Activated CD4-positive, alpha-beta T cell treated with anti-CD3 and anti-CD28 coated beads for 36 hours (primary cell): ENCODE measurements at regions of chr9 and their contacts with region 1.

Region 1: DNA sequence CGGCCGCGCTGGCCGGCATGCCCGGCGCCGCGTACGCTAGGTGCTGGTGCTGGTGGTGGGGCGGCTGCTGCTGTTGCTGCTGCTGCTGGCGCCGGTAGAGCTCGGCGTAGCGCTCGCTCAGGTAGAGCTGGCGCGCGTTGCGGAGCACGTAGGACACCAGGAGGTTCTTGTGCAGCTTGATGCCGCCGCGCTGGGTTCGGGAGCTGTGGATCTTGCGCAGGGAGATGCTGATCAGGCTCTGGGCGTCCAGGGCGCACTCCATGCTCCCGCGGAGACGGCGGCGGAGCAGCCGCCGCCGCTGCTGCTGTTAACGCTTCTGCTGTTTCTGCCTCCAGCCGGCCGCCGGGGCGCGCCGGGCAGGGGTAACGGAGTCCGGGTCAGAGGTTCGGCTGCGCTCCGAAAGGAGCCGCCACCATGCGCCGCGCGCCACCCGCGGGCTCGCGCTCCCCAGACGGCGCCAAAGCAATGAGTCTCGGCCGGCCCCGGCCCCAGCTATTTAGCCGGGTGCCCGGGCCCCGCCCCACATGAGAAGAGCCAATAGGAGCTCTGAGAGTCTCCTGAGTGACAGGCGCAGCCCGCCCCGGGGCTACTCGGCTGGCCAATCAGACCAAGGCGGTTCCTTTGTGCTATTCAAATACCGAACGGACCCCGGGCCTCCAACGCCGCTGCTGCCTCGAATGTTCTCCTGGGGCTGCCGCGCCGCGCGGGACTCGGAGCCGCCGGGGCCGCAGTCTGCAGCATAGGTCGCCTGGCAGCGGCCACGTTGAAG is at the start of gene IER5L:
- DNase-seq: peak; percentile 96
- ATAC-seq: peak; percentile 88
- H3K4me3 Mint-ChIP-seq: peak within 1 kb of the TSS; percentile 83
- H3K27ac Mint-ChIP-seq: peak within 1 kb of the TSS; percentile 65
- H3K4me1 Mint-ChIP-seq: peaks cover 7% of the 10 kb centered on the region
- H3K27me3 Mint-ChIP-seq: peaks cover 3% of the 10 kb centered on the region
- total RNA-seq, gene IER5L: 2.6 to 2.8 TPM

Region 2: DNA sequence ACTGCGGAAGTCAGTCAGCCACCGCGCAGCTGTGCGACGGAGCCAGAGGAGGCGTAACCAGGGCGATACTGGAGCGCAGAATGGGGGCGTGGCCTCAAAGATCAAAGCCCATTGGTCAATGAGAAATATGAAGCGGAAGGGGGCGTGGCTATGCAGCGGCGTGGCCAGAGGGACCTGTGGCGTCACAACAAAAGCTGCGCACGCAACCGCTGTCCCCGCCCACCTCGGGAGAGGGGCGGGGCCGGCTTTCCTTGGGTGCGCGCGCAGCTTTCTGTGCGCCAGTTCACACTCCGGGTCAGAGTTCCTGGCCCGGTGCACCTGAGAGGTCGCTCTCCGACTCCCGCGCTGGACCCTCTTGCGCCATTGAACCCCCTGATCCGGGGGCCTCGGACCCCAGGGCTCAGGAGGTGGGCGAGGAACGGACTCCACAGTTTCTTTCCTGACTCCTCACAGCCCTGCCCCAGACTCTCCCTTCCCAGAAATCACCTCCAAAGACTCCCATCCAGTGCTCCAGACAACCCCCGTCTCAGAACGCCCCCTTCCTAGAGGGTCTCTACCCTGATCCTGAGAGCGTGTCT is 901.9 kb before region 1 on chr9 and contains the starts of genes GOLGA2 and SWI5:
- CTCF ChIA-PET with region 1: no interaction called
- POLR2A ChIA-PET with region 1: no interaction called
- intact Hi-C with region 1: no loop called
- DNase-seq: peak; percentile 100
- ATAC-seq: peak; percentile 99
- H3K4me3 Mint-ChIP-seq: peak within 1 kb of the TSS; percentile 97
- H3K27ac Mint-ChIP-seq: peak within 1 kb of the TSS; percentile 95
- H3K4me1 Mint-ChIP-seq: peaks cover 31% of the 10 kb centered on the region
- H3K27me3 Mint-ChIP-seq: no peaks in the 10 kb centered on the region
- total RNA-seq, gene GOLGA2: 28.4 to 29.4 TPM
- total RNA-seq, gene SWI5: 13.1 to 14.1 TPM

Region 3: DNA sequence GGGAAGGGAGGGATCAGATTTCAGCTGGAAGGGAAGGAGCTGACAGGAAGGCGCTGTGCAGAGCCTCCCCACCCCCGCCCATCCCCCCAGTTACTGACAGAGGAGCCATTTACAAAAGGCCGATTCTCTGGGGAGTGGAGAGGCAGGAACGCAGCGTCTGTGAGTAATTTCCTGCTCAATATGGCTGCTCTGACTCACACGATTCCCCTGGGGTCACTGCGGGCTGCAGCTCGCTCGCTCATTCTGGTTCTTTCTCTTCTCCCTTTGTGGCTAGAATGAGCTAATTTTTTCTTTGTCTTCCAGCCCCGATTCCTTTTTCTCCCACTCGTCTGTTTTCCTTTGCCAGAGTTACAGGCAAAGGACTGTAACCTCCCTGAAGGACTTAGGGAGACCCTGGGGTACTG is 38.0 kb before region 1 on chr9:
- CTCF ChIA-PET with region 1: interaction called, 42 read pairs
- POLR2A ChIA-PET with region 1: interaction called, 7 read pairs
- intact Hi-C with region 1: loop called (anchors 1 to 2 kb)
- DNase-seq: peak; percentile 91
- ATAC-seq: peak; percentile 90
- H3K4me3 Mint-ChIP-seq: peak overlapping the region; percentile 83
- H3K27ac Mint-ChIP-seq: peak overlapping the region; percentile 99
- H3K4me1 Mint-ChIP-seq: peaks cover 37% of the 10 kb centered on the region
- H3K27me3 Mint-ChIP-seq: no peaks in the 10 kb centered on the region

Region 4: DNA sequence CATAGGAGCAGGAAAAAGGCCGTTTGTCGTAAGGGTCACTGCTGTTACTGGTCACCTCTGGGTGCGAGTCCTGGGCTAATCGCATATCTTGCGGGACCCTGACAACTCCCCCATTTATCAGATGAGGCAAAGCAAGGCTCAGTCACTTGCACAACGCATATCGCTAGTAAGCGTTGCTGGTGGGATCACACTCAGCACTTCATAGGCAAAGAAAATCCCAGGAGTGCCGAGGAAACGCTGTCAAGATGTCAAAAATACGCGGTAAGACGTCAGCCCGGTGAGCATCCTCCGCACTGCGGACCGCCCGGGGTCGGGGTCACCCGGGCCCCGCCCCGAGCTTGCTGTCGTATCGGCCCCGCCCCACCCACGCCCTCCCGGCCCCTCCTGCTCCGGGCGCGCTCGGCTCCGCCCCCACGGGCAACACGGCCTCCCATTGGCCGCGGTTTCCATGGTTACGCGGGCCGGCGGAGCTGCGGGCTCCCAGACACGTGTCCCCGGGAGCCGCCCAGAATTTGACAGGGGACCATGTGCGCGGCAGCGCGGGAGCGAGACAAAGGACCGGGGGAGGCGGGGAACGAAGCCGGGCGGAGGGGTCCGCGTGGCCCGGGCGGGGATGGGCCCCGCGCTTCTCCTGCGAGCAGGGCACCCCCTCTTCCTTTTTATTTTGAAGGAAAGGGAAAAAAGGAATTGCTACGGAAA is 80.3 kb after region 1 on chr9:
- CTCF ChIA-PET with region 1: interaction called, 4 read pairs
- POLR2A ChIA-PET with region 1: interaction called, 6 read pairs
- intact Hi-C with region 1: loop called in 1 of 2 experiments (anchors 5 kb)
- DNase-seq: peak; percentile 96
- ATAC-seq: peak; percentile 96
- H3K4me3 Mint-ChIP-seq: peak overlapping the region; percentile 61
- H3K27ac Mint-ChIP-seq: no peak overlapping the region
- H3K4me1 Mint-ChIP-seq: peaks cover 27% of the 10 kb centered on the region
- H3K27me3 Mint-ChIP-seq: peaks cover 15% of the 10 kb centered on the region

Region 5: DNA sequence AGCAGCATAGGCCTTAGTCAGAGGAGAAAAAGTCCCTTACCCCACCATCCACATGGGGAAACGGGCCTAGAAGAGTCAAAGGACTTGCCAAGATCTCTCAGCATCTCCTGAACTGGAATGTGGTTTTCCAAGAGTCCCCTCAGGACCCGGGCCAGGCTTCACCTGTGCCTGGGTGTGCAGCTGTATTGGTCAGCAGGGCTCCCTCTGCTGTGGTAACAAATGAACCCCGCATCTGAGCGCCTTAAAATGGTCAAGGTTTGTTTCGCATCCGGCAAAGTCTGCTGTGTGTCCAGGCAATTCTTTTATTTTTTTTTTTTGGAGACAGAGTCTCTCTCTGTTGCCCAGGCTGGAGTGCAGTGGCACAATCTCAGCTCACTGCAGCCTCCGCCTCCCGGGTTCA is 168.1 kb after region 1 on chr9:
- CTCF ChIA-PET with region 1: no interaction called
- POLR2A ChIA-PET with region 1: no interaction called
- intact Hi-C with region 1: loop called in 1 of 2 experiments (anchors 1 kb)
- DNase-seq: no peak
- ATAC-seq: no peak
- H3K4me3 Mint-ChIP-seq: no peak overlapping the region
- H3K27ac Mint-ChIP-seq: peak overlapping the region; percentile 58
- H3K4me1 Mint-ChIP-seq: peaks cover 11% of the 10 kb centered on the region
- H3K27me3 Mint-ChIP-seq: no peaks in the 10 kb centered on the region

Region 6: GRCh38 chr9:129460323-129461261 is 282.6 kb after region 1 on chr9:
- CTCF ChIA-PET with region 1: interaction called, 5 read pairs
- POLR2A ChIA-PET with region 1: interaction called, 3 read pairs
- intact Hi-C with region 1: loop called in 1 of 2 experiments (anchors 1 kb)
- DNase-seq: peak; percentile 96
- ATAC-seq: peak; percentile 87
- H3K4me3 Mint-ChIP-seq: peak overlapping the region; percentile 72
- H3K27ac Mint-ChIP-seq: peak overlapping the region; percentile 92
- H3K4me1 Mint-ChIP-seq: peaks cover 38% of the 10 kb centered on the region
- H3K27me3 Mint-ChIP-seq: no peaks in the 10 kb centered on the region

Region 7: GRCh38 chr9:129610473-129611301 is 432.7 kb after region 1 on chr9:
- CTCF ChIA-PET with region 1: interaction called, 6 read pairs
- POLR2A ChIA-PET with region 1: no interaction called
- intact Hi-C with region 1: loop called (anchors 1 kb)
- DNase-seq: peak; percentile 85
- ATAC-seq: peak; percentile 63
- H3K4me3 Mint-ChIP-seq: peak overlapping the region; percentile 73
- H3K27ac Mint-ChIP-seq: peak overlapping the region; percentile 47
- H3K4me1 Mint-ChIP-seq: peaks cover 29% of the 10 kb centered on the region
- H3K27me3 Mint-ChIP-seq: no peaks in the 10 kb centered on the region